HCT116 (cell line): ENCODE measurements at regions of chr9 and their contacts with region 1.

Region 1: GRCh38 chr9:129139993-129140396 is 28.8 kb downstream of the PTPA start:
- DNase-seq: peak; percentile 95
- ATAC-seq: peak; percentile 78
- H3K4me3 ChIP-seq: peak overlapping the region; percentile 60 to 69
- H3K27ac ChIP-seq: peak overlapping the region; percentile 99
- H3K4me1 ChIP-seq: peaks cover 39 to 70% of the 10 kb centered on the region in 2 experiments
- H3K27me3 ChIP-seq: no peaks in the 10 kb centered on the region
- CTCF ChIP-seq: no peak
- POLR2A ChIP-seq: no peak
- RAD21 ChIP-seq: no peak

Region 2: DNA sequence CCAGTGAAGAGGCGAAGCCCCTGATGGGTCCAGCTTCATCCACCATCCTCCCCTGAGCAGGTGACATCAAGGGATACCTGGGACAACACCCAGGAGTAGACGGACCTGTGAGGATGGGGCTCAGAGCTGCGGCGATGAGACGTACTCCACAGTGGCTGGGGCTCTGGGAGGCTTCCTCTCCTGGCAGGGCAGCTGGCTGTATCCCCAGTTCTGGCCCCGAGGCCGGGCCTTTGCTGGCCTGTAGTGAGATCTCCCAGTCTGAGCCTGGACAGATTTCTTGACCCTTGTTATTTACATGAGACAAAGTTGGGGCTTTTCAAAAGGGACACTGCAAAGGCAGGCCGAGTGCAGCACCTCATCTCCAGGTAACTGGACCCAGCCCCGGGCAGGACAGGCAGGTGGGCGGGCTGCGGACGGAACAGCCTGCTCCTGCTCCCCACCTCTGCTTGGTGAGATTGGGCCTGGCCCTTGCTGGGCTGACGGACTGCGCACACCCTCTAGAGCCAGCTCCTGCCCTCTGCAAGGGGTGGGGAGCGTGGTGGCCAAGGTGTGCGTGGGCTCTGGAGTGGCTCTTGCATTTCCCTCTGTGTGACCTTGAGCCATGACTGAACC is 15.0 kb after region 1 on chr9:
- CTCF ChIA-PET with region 1: interaction called, 12 read pairs
- POLR2A ChIA-PET with region 1: interaction called, 7 read pairs
- RAD21 ChIA-PET with region 1: no interaction called
- intact Hi-C with region 1: no loop called
- DNase-seq: no peak
- ATAC-seq: no peak
- H3K4me3 ChIP-seq: no peak overlapping the region
- H3K27ac ChIP-seq: no peak overlapping the region
- H3K4me1 ChIP-seq: no peaks in the 10 kb centered on the region
- H3K27me3 ChIP-seq: no peaks in the 10 kb centered on the region
- CTCF ChIP-seq: no peak
- POLR2A ChIP-seq: no peak
- RAD21 ChIP-seq: no peak

Region 3: DNA sequence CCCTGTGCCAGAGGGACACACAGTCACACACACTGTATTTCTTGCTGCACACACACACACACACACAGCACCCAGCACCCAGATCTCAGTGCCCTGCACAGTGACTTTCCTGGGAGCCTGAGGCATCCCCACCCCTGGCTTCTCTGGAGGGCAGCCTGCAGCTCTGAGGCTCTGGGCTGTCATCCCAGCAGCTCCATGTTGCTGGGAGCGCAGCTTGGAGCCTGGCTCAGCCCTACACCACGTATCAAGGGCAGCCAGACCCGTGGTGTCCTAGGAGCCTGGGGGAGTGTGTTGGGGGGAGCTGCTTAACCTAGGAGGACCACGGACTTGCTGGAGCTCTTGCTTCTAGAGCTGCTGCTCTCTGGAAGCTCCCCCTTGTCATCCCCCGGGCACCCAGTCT is 32.8 kb after region 1 on chr9:
- CTCF ChIA-PET with region 1: interaction called, 23 read pairs
- POLR2A ChIA-PET with region 1: interaction called, 13 read pairs
- RAD21 ChIA-PET with region 1: interaction called, 3 to 7 read pairs
- intact Hi-C with region 1: no loop called
- DNase-seq: no peak
- ATAC-seq: no peak
- H3K4me3 ChIP-seq: no peak overlapping the region
- H3K27ac ChIP-seq: peak overlapping the region; percentile 29; the same call in 1 of the 2 replicates
- H3K4me1 ChIP-seq: peaks cover 62 to 85% of the 10 kb centered on the region in 2 experiments
- H3K27me3 ChIP-seq: no peaks in the 10 kb centered on the region
- CTCF ChIP-seq: no peak
- POLR2A ChIP-seq: no peak
- RAD21 ChIP-seq: no peak

Region 4: DNA sequence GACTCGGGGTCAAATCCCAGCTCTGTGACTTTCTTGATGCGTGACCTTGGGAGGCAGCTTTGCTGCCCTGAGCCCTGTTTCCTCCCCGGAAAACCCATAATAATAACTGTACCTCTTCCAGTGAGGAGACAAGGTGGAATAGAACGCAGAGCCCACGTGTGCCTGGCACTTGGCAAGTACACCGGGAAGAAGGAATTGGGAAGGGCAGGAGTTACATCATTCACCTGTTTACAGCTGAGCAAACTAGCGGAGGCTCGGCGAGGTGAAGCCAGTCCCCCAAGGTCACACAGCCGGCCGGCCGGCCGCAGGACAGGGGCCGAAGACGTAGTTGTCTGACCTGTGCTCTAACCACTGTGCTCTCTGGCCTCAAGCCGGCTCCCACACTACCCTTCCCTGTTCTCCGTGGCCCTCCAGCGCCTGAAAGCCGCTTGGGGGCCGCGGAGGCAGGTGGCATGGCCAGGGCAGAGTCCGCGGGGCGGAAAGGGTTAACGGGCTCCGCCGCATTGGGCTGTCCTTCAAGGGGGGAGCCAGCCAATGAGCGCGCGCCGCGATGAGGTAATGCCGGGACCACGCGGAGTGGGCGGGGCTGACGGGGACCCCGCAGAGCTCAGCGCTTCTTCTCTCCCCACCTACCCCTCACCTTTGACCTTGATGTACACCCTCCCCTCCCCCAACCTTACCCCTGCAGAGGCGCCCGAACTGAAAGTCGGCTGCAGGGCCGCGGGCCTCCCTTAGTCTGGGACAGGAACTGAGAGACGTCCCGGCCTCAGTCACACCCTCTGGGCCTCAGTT is 355.7 kb after region 1 on chr9:
- CTCF ChIA-PET with region 1: interaction called, 10 read pairs
- POLR2A ChIA-PET with region 1: interaction called, 6 read pairs
- RAD21 ChIA-PET with region 1: no interaction called
- intact Hi-C with region 1: no loop called
- DNase-seq: peak; percentile 82
- ATAC-seq: peak; percentile 71
- H3K4me3 ChIP-seq: peak overlapping the region; percentile 62 to 67
- H3K27ac ChIP-seq: peak overlapping the region; percentile 100
- H3K4me1 ChIP-seq: peaks cover 74 to 100% of the 10 kb centered on the region in 2 experiments
- H3K27me3 ChIP-seq: no peaks in the 10 kb centered on the region
- CTCF ChIP-seq: no peak
- POLR2A ChIP-seq: no peak
- RAD21 ChIP-seq: no peak

Region 5: DNA sequence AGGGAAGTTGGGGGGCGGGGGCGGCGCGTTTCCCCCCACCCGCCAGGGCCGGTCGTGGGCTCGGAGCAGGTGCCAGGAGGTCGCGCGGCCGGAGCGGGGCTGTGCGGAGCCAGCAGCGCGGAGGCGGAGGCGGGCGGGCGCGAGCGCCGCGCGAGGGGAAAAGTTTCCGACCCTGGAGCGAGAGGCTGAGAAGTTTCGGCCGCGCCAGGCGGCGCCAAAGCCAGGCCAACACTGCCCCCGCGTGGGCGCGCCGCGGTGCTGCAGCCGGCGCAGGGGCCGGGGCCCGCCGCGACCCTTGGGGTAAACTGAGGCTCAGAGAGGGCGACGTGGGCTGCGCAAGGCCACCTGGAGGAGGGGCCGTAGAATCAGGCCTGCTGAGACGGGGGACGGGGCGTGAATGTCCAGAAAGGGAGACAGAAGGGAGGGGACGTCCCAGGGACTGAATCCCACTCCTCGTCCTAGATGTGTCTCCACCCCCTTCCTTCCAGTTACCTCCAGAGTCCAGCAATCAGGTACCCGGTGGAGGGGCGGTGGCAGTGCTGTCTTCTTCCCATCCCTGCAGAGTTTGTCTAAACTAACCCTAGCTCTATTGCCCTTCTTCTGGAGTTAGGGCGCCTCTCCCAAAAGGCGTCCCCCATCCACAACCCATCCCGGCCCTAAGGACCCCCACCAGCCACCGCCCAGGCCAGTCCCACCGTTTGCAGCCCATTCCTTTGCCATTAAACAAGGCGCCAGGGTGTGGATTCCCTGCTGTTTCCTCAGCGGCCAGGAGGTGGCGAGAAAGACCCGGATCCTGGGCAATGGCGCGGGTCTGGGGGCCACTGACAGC is 470.7 kb after region 1 on chr9:
- CTCF ChIA-PET with region 1: interaction called, 18 read pairs
- POLR2A ChIA-PET with region 1: interaction called, 10 read pairs
- RAD21 ChIA-PET with region 1: no interaction called
- intact Hi-C with region 1: loop called (anchors 1 kb)
- DNase-seq: no peak
- ATAC-seq: peak; percentile 43
- H3K4me3 ChIP-seq: peak overlapping the region; percentile 51 to 64
- H3K27ac ChIP-seq: peak overlapping the region; percentile 96
- H3K4me1 ChIP-seq: peaks cover 63 to 87% of the 10 kb centered on the region in 2 experiments
- H3K27me3 ChIP-seq: no peaks in the 10 kb centered on the region
- CTCF ChIP-seq: peak in 2 of 3 experiments; percentile 79 to 85; a peak in 4 of 6 replicates
- POLR2A ChIP-seq: no peak
- RAD21 ChIP-seq: no peak

Region 6: GRCh38 chr9:129796029-129796910 is 656.3 kb after region 1 on chr9:
- CTCF ChIA-PET with region 1: no interaction called
- POLR2A ChIA-PET with region 1: no interaction called
- RAD21 ChIA-PET with region 1: no interaction called
- intact Hi-C with region 1: loop called (anchors 2 kb)
- DNase-seq: no peak
- ATAC-seq: no peak
- H3K4me3 ChIP-seq: no peak overlapping the region
- H3K27ac ChIP-seq: no peak overlapping the region
- H3K4me1 ChIP-seq: no peaks in the 10 kb centered on the region; a peak in 1 of 4 replicates
- H3K27me3 ChIP-seq: peaks cover 4% of the 10 kb centered on the region; the same call in 1 of the 2 replicates
- CTCF ChIP-seq: no peak
- POLR2A ChIP-seq: no peak
- RAD21 ChIP-seq: no peak